Esophagus squamous epithelium (tissue), 5 donors: ENCODE measurements at regions of chr12 and their contacts with region 1.

Region 1: GRCh38 chr12:6285063-6285477 is 25.4 kb upstream of the PLEKHG6 start:
- DNase-seq: no peak
- H3K4me3 ChIP-seq: no peak overlapping the region
- H3K27ac ChIP-seq: peak overlapping the region in 2 of 4 donors; percentile 63 to 65
- H3K4me1 ChIP-seq: peaks cover 9 to 62% (median 22%) of the 10 kb centered on the region in 3 donors
- H3K27me3 ChIP-seq: no peaks in the 10 kb centered on the region
- CTCF ChIP-seq: peak; percentile 70 to 95 (median 94)
- POLR2A ChIP-seq: no peak

Region 2: GRCh38 chr12:6195665-6196535 is 89.2 kb before region 1 on chr12:
- intact Hi-C with region 1: loop called (anchors 2 kb)
- DNase-seq: no peak
- H3K4me3 ChIP-seq: no peak overlapping the region
- H3K27ac ChIP-seq: peak overlapping the region; percentile 41 to 98 (median 82)
- H3K4me1 ChIP-seq: peaks cover 8 to 64% (median 20%) of the 10 kb centered on the region in 3 donors
- H3K27me3 ChIP-seq: no peaks in the 10 kb centered on the region
- CTCF ChIP-seq: peak; percentile 66 to 98 (median 96)
- POLR2A ChIP-seq: peak in 1 of 4 donors; percentile 12

Region 3: GRCh38 chr12:6230321-6231110 is 54.6 kb before region 1 on chr12:
- intact Hi-C with region 1: no loop called
- DNase-seq: peak; percentile 34
- H3K4me3 ChIP-seq: peak overlapping the region in 2 of 4 donors; percentile 18 to 27
- H3K27ac ChIP-seq: peak overlapping the region; percentile 91 to 98 (median 92)
- H3K4me1 ChIP-seq: peaks cover 78 to 100% (median 96%) of the 10 kb centered on the region in 3 donors
- H3K27me3 ChIP-seq: no peaks in the 10 kb centered on the region
- CTCF ChIP-seq: no peak
- POLR2A ChIP-seq: peak in 1 of 4 donors; percentile 13